Aorta (tissue), 5 donors: ENCODE measurements at regions of chr13 and their contacts with region 1.

Region 1: DNA sequence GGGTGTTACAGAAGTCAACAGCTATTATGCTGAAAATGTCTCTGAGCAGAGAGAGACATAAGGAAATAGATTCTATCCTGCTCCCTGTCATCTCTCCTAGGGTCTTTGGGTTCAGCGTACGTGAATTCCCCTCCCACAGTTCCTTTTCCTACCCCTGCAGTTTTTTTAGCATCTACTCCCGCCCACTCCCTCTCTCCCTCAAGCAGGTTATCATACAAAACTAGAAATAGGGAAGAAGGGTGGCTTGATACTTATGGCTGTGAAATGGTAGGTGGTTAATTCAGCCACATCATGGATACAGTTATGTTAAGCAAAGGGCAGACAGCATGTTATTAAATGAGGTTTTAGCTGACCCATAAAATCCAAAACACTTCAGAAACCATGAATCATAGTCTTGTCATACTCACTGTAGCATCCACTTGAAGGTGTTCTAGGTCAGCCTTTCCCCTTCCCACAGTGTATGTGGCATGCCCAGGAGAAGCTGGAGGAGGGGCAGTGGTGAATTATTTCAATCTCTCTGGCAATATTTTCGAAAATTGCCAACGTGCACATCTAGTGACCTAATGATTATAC is 236.8 kb upstream of the SERP2 start:
- DNase-seq: no peak
- ATAC-seq: no peak
- H3K4me3 ChIP-seq: no peak overlapping the region
- H3K27ac ChIP-seq: no peak overlapping the region
- H3K4me1 ChIP-seq: no peaks in the 10 kb centered on the region
- H3K27me3 ChIP-seq: no peaks in the 10 kb centered on the region

Region 2: GRCh38 chr13:44050450-44051063 is 86.2 kb before region 1 on chr13:
- intact Hi-C with region 1: loop called in 1 of 2 experiments (anchors 5 kb)
- DNase-seq: no peak
- ATAC-seq: no peak
- H3K4me3 ChIP-seq: no peak overlapping the region
- H3K27ac ChIP-seq: no peak overlapping the region
- H3K4me1 ChIP-seq: peaks cover 3 to 5% of the 10 kb centered on the region in 2 donors
- H3K27me3 ChIP-seq: no peaks in the 10 kb centered on the region

Region 3: GRCh38 chr13:44093607-44094564 is 42.9 kb before region 1 on chr13:
- intact Hi-C with region 1: no loop called
- DNase-seq: no peak
- ATAC-seq: no peak
- H3K4me3 ChIP-seq: no peak overlapping the region
- H3K27ac ChIP-seq: no peak overlapping the region
- H3K4me1 ChIP-seq: no peaks in the 10 kb centered on the region
- H3K27me3 ChIP-seq: no peaks in the 10 kb centered on the region